Activated T-helper 2 cell treated with anti-CD3 and anti-CD28 coated beads, Interferon-gamma antibody, Interleukin-2, Interleukin-4, amounts not matched to agents 10 μg/mL and 5 μg/mL and 100 μg/mL, durations not matched to agents 14 hours and 24 hours and 36 hours (primary cell): ENCODE measurements at regions of chr10 and their contacts with region 1.

Region 1: GRCh38 chr10:18625886-18626285 is 25.5 kb downstream of the NSUN6 start:
- DNase-seq: no peak
- H3K4me3 Mint-ChIP-seq: no peak overlapping the region
- H3K27ac Mint-ChIP-seq: no peak overlapping the region
- H3K4me1 Mint-ChIP-seq: peaks cover 16% of the 10 kb centered on the region
- H3K27me3 Mint-ChIP-seq: no peaks in the 10 kb centered on the region

Region 2: DNA sequence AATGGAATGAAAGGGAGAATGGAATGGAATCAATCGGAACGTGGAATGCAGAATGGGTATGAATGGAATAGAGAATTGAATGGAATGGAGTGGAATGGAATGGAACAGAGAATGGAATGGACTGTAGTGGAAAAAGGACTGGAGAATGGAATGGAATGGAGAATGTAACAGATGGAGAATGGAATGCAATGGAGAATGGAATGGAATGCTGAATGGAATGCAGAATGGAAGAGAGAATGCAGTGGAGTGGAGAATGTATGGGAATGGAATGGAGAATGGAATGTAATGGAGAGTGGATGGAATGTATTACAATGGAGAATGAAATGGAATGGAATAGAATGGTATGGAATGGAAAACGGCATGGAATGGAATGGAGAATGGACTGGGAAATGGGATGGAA is 71.4 kb before region 1 on chr10:
- intact Hi-C with region 1: no loop called
- DNase-seq: no peak
- H3K4me3 Mint-ChIP-seq: no peak overlapping the region
- H3K27ac Mint-ChIP-seq: no peak overlapping the region
- H3K4me1 Mint-ChIP-seq: no peaks in the 10 kb centered on the region
- H3K27me3 Mint-ChIP-seq: no peaks in the 10 kb centered on the region

Region 3: GRCh38 chr10:18651324-18652007 is 25.6 kb after region 1 on chr10 and contains the start of gene NSUN6:
- intact Hi-C with region 1: loop called (anchors 2 kb)
- DNase-seq: peak; percentile 92
- H3K4me3 Mint-ChIP-seq: peak within 1 kb of the TSS; percentile 91
- H3K27ac Mint-ChIP-seq: peak within 1 kb of the TSS; percentile 93
- H3K4me1 Mint-ChIP-seq: peaks cover 38% of the 10 kb centered on the region
- H3K27me3 Mint-ChIP-seq: no peaks in the 10 kb centered on the region
- total RNA-seq, gene NSUN6: 13.7 and 16.4 TPM in 2 replicates